MCF 10A (cell line): ENCODE measurements at regions of chr1 and their contacts with region 1.

Region 1: GRCh38 chr1:241519308-241520079 is at the start of gene FH:
- DNase-seq: peak; percentile 100
- H3K4me3 Mint-ChIP-seq: no peak within 1 kb of the TSS
- H3K27ac Mint-ChIP-seq: peak within 1 kb of the TSS; percentile 67
- H3K4me1 Mint-ChIP-seq: peaks cover 19% of the 10 kb centered on the region
- H3K27me3 Mint-ChIP-seq: peaks cover 13% of the 10 kb centered on the region
- CTCF ChIP-seq: no peak
- total RNA-seq, gene FH: 136 and 215 TPM in 2 replicates

Region 2: GRCh38 chr1:241311056-241311746 is 208.3 kb before region 1 on chr1:
- CTCF ChIA-PET with region 1: interaction called, 3 read pairs
- POLR2A ChIA-PET with region 1: interaction called, 5 read pairs
- intact Hi-C with region 1: loop called (anchors 1 kb)
- DNase-seq: peak; percentile 79
- H3K4me3 Mint-ChIP-seq: peak overlapping the region; percentile 0
- H3K27ac Mint-ChIP-seq: peak overlapping the region; percentile 37
- H3K4me1 Mint-ChIP-seq: peaks cover 15% of the 10 kb centered on the region
- H3K27me3 Mint-ChIP-seq: no peaks in the 10 kb centered on the region
- CTCF ChIP-seq: peak; percentile 62

Region 3: DNA sequence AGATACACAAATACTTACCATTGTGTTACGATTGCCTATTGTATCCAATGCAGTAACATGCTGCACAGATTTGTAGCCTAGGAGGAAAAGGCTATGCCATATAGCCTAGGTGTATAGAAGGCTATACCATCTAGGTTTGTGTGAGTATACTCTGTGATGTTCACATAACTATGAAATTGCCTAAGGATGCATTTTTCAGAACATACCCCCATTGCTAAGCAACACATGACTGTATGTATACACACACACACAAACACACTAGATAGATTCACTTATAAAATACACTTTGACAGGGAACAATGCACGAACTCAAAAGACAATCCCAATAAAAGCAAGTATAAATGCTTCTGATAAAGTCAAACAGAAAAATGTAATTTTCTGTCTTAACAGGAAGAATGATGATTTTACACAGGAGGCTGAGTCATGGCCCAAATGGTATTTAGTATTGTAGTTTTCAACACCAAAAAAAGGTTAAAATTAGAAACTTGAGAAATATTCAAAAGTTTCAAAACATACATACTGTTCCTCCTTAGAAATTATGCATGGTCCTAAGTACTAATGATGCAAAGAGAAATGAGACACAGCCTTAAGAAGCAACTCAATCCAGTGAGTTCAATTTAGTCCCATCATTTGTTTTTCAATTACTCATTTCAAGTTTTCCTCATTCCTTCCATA is 12.2 kb before region 1 on chr1:
- CTCF ChIA-PET with region 1: interaction called, 10 read pairs
- POLR2A ChIA-PET with region 1: interaction called, 35 read pairs
- intact Hi-C with region 1: no loop called
- DNase-seq: no peak
- H3K4me3 Mint-ChIP-seq: no peak overlapping the region
- H3K27ac Mint-ChIP-seq: peak overlapping the region; percentile 53
- H3K4me1 Mint-ChIP-seq: peaks cover 5% of the 10 kb centered on the region
- H3K27me3 Mint-ChIP-seq: no peaks in the 10 kb centered on the region
- CTCF ChIP-seq: no peak

Region 4: GRCh38 chr1:241592273-241592958 is 72.9 kb after region 1 on chr1:
- CTCF ChIA-PET with region 1: interaction called, 4 read pairs
- POLR2A ChIA-PET with region 1: interaction called, 42 read pairs
- intact Hi-C with region 1: no loop called
- DNase-seq: peak; percentile 98
- H3K4me3 Mint-ChIP-seq: peak overlapping the region; percentile 7
- H3K27ac Mint-ChIP-seq: peak overlapping the region; percentile 76
- H3K4me1 Mint-ChIP-seq: peaks cover 39% of the 10 kb centered on the region
- H3K27me3 Mint-ChIP-seq: no peaks in the 10 kb centered on the region
- CTCF ChIP-seq: no peak

Region 5: GRCh38 chr1:241647658-241648057 is 128.2 kb after region 1 on chr1:
- CTCF ChIA-PET with region 1: no interaction called
- POLR2A ChIA-PET with region 1: no interaction called
- intact Hi-C with region 1: no loop called
- DNase-seq: peak; percentile 76
- H3K4me3 Mint-ChIP-seq: no peak overlapping the region
- H3K27ac Mint-ChIP-seq: no peak overlapping the region
- H3K4me1 Mint-ChIP-seq: peaks cover 11% of the 10 kb centered on the region
- H3K27me3 Mint-ChIP-seq: no peaks in the 10 kb centered on the region
- CTCF ChIP-seq: no peak

Region 6: DNA sequence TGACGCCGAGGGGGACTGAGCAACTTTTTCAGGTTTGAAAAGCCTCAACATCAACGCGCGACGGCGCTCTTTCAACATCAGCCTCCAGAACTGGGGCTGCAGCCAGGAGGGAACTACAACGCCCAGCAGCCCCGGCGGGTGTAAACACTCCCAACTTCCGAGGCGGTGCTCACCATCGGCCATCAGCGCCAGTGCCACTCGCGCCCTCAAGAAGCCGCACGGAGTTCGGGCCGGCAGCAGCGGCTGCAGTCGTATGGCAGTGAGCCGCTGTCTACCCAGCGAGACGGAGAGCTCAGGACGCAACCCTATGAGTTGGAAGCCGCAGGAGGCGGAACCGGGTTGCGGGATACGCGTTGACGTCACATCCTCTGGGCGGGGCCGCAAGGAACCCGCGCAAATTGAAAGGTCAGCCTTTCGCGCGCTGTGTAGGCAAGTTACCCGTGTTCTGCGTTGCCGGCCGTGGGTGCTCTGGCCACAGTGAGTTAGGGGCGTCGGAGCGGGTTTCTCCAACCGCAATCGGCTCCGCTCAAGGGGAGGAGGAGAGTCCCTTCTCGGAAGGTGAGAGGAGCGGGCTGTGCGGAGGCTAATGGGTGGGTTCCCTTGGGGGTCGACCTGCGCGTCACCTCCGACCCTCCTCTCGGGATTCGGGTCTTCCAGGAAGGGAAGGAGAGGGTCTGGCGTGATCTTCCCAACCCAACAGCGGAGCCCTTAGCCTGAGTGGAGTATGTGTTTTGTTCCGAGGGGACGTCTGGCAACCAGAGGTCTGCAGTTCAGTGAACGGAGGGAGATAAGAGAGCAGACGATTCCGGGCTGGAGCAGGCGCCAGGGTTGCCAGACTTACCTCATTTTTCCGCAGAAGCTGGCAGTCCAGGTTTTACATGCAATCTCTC is 328.5 kb after region 1 on chr1 and contains the start of gene EXO1:
- CTCF ChIA-PET with region 1: no interaction called
- POLR2A ChIA-PET with region 1: interaction called, 11 read pairs
- intact Hi-C with region 1: no loop called
- DNase-seq: peak; percentile 98
- H3K4me3 Mint-ChIP-seq: peak within 1 kb of the TSS; percentile 95
- H3K27ac Mint-ChIP-seq: peak within 1 kb of the TSS; percentile 81
- H3K4me1 Mint-ChIP-seq: peaks cover 18% of the 10 kb centered on the region
- H3K27me3 Mint-ChIP-seq: no peaks in the 10 kb centered on the region
- CTCF ChIP-seq: peak; percentile 38
- total RNA-seq, gene EXO1: 7.3 and 17.5 TPM in 2 replicates